ENCODE measurements at regions of chr11 and their contacts with region 1.

Region 1: DNA sequence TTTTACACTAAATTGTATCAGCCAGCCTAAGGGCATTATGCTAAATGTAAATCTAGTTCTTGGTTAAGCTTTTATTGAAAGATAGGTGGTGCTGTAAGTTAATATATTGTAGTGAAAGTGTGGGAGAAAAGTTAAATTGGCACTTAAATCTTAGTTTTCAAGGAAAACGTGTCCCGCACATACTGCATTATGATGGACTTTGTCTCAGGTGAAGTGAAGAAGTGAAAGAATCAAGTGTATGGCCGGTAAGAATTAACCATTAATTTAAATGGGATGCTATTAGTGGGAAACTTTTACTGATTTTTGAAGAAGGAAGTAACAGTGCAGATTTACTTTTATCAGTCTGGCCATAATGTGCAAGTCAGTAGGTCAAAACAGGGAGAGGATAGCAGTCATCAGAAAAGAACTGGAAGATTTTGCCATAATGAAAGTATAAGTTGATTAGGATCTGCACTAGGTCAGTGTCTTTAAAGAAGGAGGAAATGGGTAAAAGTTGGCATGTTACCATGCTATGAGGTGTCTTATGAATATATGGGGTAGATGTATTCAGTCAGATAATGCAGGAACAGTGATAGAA is 81.6 kb downstream of the PDHX start:
- DNase-seq: peak; percentile 63
- ATAC-seq: peak; percentile 56
- H3K4me3 ChIP-seq: peak overlapping the region in 2 of 5 experiments; percentile 2 to 31
- H3K4me3 Mint-ChIP-seq: peak overlapping the region; percentile 59
- H3K27ac ChIP-seq: peak overlapping the region in 1 of 2 donors; percentile 4
- H3K27ac Mint-ChIP-seq: peak overlapping the region; percentile 71
- H3K4me1 ChIP-seq: peaks cover 11 to 16% of the 10 kb centered on the region in 2 donors
- H3K4me1 Mint-ChIP-seq: peaks cover 27% of the 10 kb centered on the region
- H3K27me3 ChIP-seq: no peaks in the 10 kb centered on the region
- H3K27me3 Mint-ChIP-seq: no peaks in the 10 kb centered on the region
- CTCF ChIP-seq: peak; percentile 93

Region 2: DNA sequence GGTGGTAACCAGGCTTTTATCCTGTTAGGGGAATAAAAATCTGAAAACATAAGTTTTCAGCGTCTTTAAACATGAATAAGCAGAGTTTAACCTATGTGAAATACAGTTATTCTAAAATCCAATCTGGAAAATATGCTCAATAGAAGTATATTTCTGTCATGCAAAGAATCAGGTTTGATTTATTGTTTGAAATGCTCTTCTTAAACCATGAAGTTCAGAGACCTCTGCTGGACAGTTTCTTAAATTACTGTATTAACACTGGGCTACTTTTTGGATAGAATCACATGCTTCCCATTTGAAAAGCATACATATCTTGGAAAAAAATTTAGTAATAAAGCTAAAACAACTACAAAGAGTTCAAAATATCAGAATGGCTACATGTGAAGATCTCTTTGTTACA is 107.2 kb before region 1 on chr11:
- CTCF ChIA-PET with region 1: no interaction called
- POLR2A ChIA-PET with region 1: no interaction called
- intact Hi-C with region 1: no loop called
- DNase-seq: peak; percentile 26
- ATAC-seq: no peak
- H3K4me3 ChIP-seq: no peak overlapping the region
- H3K4me3 Mint-ChIP-seq: no peak overlapping the region
- H3K27ac ChIP-seq: no peak overlapping the region
- H3K27ac Mint-ChIP-seq: no peak overlapping the region
- H3K4me1 ChIP-seq: no peaks in the 10 kb centered on the region
- H3K4me1 Mint-ChIP-seq: no peaks in the 10 kb centered on the region
- H3K27me3 ChIP-seq: no peaks in the 10 kb centered on the region
- H3K27me3 Mint-ChIP-seq: no peaks in the 10 kb centered on the region
- CTCF ChIP-seq: peak; percentile 54

Region 3: GRCh38 chr11:34926101-34926830 is 71.8 kb before region 1 on chr11:
- CTCF ChIA-PET with region 1: interaction called, 7 read pairs
- POLR2A ChIA-PET with region 1: no interaction called
- intact Hi-C with region 1: loop called (anchors 5 kb)
- DNase-seq: peak; percentile 70
- ATAC-seq: peak; percentile 57
- H3K4me3 ChIP-seq: no peak overlapping the region
- H3K4me3 Mint-ChIP-seq: no peak overlapping the region
- H3K27ac ChIP-seq: no peak overlapping the region
- H3K27ac Mint-ChIP-seq: no peak overlapping the region
- H3K4me1 ChIP-seq: no peaks in the 10 kb centered on the region
- H3K4me1 Mint-ChIP-seq: peaks cover 15% of the 10 kb centered on the region
- H3K27me3 ChIP-seq: no peaks in the 10 kb centered on the region
- H3K27me3 Mint-ChIP-seq: no peaks in the 10 kb centered on the region
- CTCF ChIP-seq: peak; percentile 88

Region 4: DNA sequence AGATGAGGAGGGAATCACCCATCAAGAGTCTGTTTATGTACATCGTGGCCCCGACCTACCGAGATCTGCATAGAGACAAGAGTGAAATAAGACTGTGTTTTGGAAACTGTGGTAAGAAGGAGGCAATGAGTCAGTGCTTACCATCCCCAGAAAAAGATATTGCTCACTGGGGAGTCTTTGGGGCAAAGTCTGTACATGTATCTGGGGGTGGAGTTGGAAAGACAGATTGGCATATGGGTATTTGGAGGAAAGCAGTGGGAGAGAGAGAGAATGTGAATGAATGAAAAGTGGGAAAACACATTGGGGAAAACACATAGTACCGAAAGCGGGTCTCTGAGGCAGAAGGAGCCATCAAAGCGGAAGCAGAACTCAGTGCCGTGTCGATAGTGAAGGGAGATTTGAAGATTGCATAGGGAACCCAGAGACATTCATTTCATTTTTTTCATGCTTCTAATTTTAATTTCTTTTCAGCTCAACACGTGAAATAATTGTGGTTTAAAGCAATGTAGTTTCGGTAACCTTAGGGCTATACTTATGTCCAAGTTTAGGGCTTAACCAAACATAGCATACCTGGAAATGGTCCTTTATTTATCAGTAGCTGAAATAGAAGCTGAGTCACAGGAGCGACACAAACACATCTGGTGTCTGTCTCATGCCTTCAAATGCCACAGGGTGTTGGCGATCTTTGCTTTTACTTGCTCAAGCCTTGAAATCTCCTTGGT is 42.3 kb after region 1 on chr11:
- CTCF ChIA-PET with region 1: interaction called, 9 read pairs
- POLR2A ChIA-PET with region 1: no interaction called
- intact Hi-C with region 1: loop called (anchors 2 kb)
- DNase-seq: peak; percentile 72
- ATAC-seq: peak; percentile 68
- H3K4me3 ChIP-seq: peak overlapping the region in 3 of 5 experiments; percentile 25 to 44 (median 40)
- H3K4me3 Mint-ChIP-seq: peak overlapping the region; percentile 86
- H3K27ac ChIP-seq: peak overlapping the region; percentile 41 to 66
- H3K27ac Mint-ChIP-seq: peak overlapping the region; percentile 94
- H3K4me1 ChIP-seq: peaks cover 34 to 39% of the 10 kb centered on the region in 2 donors
- H3K4me1 Mint-ChIP-seq: peaks cover 48% of the 10 kb centered on the region
- H3K27me3 ChIP-seq: no peaks in the 10 kb centered on the region
- H3K27me3 Mint-ChIP-seq: no peaks in the 10 kb centered on the region
- CTCF ChIP-seq: no peak

Region 5: GRCh38 chr11:35144136-35144741 is 146.2 kb after region 1 on chr11:
- CTCF ChIA-PET with region 1: interaction called, 40 read pairs
- POLR2A ChIA-PET with region 1: no interaction called
- intact Hi-C with region 1: loop called (anchors 1 kb)
- DNase-seq: peak; percentile 90
- ATAC-seq: peak; percentile 60
- H3K4me3 ChIP-seq: peak overlapping the region; percentile 1 to 89 (median 26)
- H3K4me3 Mint-ChIP-seq: peak overlapping the region; percentile 78
- H3K27ac ChIP-seq: peak overlapping the region; percentile 79 to 87
- H3K27ac Mint-ChIP-seq: peak overlapping the region; percentile 83
- H3K4me1 ChIP-seq: peaks cover 80 to 90% of the 10 kb centered on the region in 2 donors
- H3K4me1 Mint-ChIP-seq: peaks cover 80% of the 10 kb centered on the region
- H3K27me3 ChIP-seq: no peaks in the 10 kb centered on the region
- H3K27me3 Mint-ChIP-seq: no peaks in the 10 kb centered on the region
- CTCF ChIP-seq: peak; percentile 23

Region 6: DNA sequence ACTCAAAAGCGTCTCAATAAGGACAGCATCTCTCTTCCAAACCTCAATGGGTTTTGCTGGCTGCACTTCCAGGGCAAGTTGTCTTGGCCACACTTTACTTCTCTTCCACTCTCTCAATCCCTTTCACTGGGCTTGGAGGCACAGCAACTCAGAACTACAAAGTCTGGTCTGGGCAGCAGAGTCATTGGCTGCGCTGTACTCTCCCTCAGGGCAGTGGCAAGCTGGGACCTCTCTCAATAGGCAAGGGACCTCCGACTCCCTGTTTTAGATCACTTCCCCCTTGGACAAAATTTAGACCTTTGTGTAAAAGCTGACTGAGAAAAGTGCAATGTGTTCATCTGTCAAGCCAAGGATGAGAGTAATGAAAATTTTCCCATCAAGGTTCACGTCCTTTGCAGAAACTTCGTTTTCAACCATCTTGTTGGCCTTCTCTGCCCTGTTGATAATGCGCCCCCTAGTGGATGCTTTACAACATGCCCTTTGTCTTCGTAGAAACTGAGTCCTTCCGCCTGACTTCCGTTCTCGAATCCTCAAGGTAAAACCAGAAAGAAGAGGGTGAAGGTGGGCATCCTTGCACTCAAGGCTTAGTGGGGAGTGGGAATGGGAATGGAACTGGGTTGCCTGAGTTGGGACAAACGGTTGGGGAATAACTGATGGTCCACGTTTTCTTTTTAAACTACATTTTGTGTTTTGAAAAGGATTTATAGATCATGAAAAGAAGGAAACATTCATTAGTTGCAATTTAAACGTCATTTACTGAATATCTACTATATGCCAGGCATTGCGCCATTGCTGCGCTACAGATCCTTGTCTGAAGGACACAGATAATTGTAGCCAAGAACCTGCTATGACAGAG is 240.0 kb after region 1 on chr11:
- CTCF ChIA-PET with region 1: interaction called, 39 read pairs
- POLR2A ChIA-PET with region 1: no interaction called
- intact Hi-C with region 1: loop called (anchors 1 kb)
- DNase-seq: peak; percentile 81
- ATAC-seq: no peak
- H3K4me3 ChIP-seq: no peak overlapping the region
- H3K4me3 Mint-ChIP-seq: no peak overlapping the region
- H3K27ac ChIP-seq: no peak overlapping the region
- H3K27ac Mint-ChIP-seq: no peak overlapping the region
- H3K4me1 ChIP-seq: peaks cover 6 to 11% of the 10 kb centered on the region in 2 donors
- H3K4me1 Mint-ChIP-seq: peaks cover 22% of the 10 kb centered on the region
- H3K27me3 ChIP-seq: no peaks in the 10 kb centered on the region
- H3K27me3 Mint-ChIP-seq: no peaks in the 10 kb centered on the region
- CTCF ChIP-seq: peak; percentile 90

Measured in B cell (primary cell).